Ascending aorta (tissue), 2 donors: ENCODE measurements at regions of chr6 and their contacts with region 1.

Region 1: GRCh38 chr6:35489995-35490733 is 6.7 kb downstream of the TEAD3 start:
- DNase-seq: peak; percentile 85 to 97
- H3K4me3 ChIP-seq: peak overlapping the region; percentile 34 to 55
- H3K27ac ChIP-seq: peak overlapping the region; percentile 95 to 100
- H3K4me1 ChIP-seq: peaks cover 48 to 85% of the 10 kb centered on the region in 2 donors
- H3K27me3 ChIP-seq: no peaks in the 10 kb centered on the region
- CTCF ChIP-seq: no peak

Region 2: DNA sequence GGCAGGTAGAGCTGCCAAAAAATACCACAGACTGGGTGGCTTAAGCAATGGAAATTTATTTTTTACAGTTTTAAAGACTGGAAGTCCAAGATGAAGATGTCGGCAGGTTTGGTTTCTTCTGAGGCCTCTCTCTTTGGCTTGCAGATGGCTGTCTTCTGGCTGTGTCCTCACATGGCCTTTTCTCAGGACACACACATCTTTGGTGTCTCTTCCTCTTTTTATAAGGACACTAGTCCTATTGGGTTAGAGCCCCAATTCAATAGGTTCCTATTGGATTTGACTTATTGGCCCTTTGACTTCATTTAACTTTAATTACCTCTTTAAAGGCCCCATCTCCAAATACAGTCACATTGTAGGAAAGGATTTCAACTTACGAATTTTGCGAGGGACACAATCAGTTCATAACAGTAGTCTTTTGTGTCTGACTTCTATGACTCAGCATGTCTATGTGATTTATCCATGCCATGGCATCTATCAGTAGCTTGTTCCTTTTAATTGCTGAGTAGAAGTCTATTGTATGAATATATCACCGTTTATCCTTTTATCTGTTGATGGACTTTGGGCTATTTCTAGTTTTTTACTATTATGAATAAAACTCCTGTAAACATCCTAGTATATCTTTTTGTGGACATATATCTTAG is 338.0 kb before region 1 on chr6:
- intact Hi-C with region 1: loop called (anchors 10 kb)
- DNase-seq: no peak
- H3K4me3 ChIP-seq: no peak overlapping the region
- H3K27ac ChIP-seq: peak overlapping the region; percentile 42 to 65
- H3K4me1 ChIP-seq: peaks cover 4 to 36% of the 10 kb centered on the region in 2 donors
- H3K27me3 ChIP-seq: no peaks in the 10 kb centered on the region
- CTCF ChIP-seq: no peak

Region 3: DNA sequence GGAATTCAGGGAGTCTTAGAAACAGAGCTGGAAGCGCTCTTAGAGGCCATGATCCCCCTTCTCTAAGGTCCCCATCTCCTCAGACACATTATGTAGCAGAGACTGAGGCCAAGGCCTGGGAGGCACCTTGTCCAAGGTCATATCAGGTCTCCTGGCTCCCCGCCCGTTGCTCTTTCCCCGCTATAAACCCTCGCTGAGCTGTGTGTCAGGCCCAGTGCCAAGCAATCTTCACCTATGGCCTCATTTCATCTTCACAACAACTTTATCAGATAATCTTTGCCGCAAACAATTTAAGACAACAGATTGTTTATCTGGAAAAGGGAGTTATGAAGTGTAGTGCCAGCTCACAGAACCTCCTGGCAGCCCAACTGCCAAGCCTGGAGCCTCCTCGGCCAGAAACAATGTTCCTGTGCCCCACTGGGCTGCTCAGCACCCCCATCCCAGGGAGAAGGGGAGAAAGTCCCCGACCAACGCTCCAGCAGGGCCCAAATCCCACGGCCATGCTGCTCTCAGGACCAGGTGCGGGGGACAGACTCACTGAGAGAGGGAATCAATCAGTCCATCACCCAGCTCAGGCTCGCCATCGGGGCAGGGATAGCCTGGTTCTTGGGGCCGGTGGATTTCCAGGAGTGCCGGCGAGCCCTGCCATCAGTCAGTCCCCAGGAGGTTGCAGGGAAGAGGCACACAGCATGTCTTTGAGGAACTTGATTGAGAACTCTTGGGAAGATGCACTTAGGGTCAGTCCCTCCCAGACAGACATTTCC is 54.9 kb before region 1 on chr6:
- intact Hi-C with region 1: no loop called
- DNase-seq: no peak
- H3K4me3 ChIP-seq: no peak overlapping the region
- H3K27ac ChIP-seq: no peak overlapping the region
- H3K4me1 ChIP-seq: no peaks in the 10 kb centered on the region
- H3K27me3 ChIP-seq: no peaks in the 10 kb centered on the region
- CTCF ChIP-seq: no peak

Region 4: GRCh38 chr6:35468181-35468979 is 21.8 kb before region 1 on chr6 and contains the start of gene RPL10A:
- intact Hi-C with region 1: loop called (anchors 2 kb)
- DNase-seq: peak; percentile 82 to 97
- H3K4me3 ChIP-seq: peak within 1 kb of the TSS; percentile 72 to 78
- H3K27ac ChIP-seq: peak within 1 kb of the TSS; percentile 84 to 88
- H3K4me1 ChIP-seq: peaks cover 5 to 19% of the 10 kb centered on the region in 2 donors
- H3K27me3 ChIP-seq: no peaks in the 10 kb centered on the region
- CTCF ChIP-seq: peak; percentile 97 to 98 (median 98)
- total RNA-seq, gene RPL10A: 643 TPM